Activated CD4-positive, alpha-beta memory T cell treated with anti-CD3 and anti-CD28 coated beads for 36 hours (primary cell): ENCODE measurements at regions of chrX and their contacts with region 1.

Region 1: GRCh38 chrX:72126539-72127140 is 5.1 kb downstream of the RTL5 start:
- DNase-seq: peak; percentile 88
- H3K4me3 Mint-ChIP-seq: no peak overlapping the region
- H3K27ac Mint-ChIP-seq: no peak overlapping the region
- H3K4me1 Mint-ChIP-seq: peaks cover 42% of the 10 kb centered on the region
- H3K27me3 Mint-ChIP-seq: peaks cover 9% of the 10 kb centered on the region

Region 2: DNA sequence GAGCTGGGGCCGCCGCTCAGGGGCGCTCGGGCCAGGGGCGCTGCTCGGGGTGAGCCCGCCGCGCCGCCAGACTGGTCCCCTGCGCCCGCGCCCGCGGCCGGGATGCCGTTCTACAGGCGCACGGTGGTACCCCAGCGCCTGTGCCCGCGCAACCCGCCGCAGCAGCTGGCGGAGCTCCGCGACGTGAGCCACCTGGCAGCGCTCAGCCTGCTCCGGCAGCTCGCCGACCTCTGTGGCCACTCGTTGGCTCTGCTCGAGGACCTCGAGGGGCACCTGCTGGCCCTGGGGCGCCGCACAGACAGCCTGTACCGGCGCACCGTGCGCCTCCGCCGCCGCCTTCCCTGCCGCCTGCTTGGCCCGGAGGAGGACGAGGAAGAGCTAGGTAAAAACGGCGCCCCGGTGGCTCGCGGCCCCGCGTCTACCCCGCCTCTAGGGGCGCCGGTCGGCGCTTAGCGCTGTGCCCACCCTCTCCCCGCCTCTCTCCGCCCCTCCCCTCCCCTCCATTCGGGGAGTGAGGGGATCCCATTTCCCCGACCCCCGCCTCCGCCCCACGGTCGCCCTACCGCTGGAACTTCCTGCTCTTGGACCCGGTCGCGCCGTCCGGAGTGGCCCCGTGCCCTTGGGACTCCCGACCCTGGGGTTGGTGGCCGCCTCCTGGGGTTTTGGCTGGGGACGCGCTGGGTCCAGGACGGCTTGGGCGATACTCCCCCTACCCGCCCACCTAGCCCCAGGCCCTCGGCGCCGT is 215.5 kb before region 1 on chrX:
- CTCF ChIA-PET with region 1: interaction called, 4 read pairs
- POLR2A ChIA-PET with region 1: interaction called, 3 read pairs
- intact Hi-C with region 1: loop called (anchors 2 kb)
- DNase-seq: peak; percentile 38
- H3K4me3 Mint-ChIP-seq: peak overlapping the region; percentile 26
- H3K27ac Mint-ChIP-seq: no peak overlapping the region
- H3K4me1 Mint-ChIP-seq: peaks cover 2% of the 10 kb centered on the region
- H3K27me3 Mint-ChIP-seq: peaks cover 21% of the 10 kb centered on the region

Region 3: DNA sequence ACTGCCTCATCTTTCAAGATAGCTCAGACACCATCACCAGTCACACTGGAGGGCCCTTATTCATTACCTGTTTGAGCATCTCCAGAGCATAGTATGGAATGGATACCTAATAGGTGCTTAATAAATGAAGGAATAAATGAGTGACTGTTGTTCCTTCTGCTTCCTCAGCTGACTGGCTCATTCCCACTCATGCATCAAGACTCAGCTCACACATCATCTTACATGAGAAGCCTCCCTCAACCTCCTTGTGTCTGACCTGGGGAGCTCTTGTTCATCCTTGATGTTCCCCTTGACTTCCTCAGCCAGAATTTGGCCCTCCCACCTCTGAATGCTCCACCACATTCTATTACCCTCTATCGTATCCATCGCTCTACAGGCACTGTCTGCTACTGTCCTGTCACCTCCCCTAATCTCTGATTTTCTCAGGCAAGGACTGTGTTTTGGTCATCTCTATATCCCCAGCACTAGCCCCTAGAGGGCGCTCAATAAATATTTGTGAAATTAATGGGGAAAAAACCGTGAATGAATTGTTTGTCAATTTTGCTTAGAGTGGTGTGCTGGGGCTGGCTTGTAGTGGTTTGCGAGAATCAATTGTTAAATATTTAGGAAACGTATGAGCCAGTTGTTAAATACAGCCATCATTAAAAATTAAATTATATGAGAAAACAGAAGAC is 127.7 kb before region 1 on chrX:
- CTCF ChIA-PET with region 1: interaction called, 60 read pairs
- POLR2A ChIA-PET with region 1: no interaction called
- intact Hi-C with region 1: loop called (anchors 1 kb)
- DNase-seq: peak; percentile 29
- H3K4me3 Mint-ChIP-seq: no peak overlapping the region
- H3K27ac Mint-ChIP-seq: no peak overlapping the region
- H3K4me1 Mint-ChIP-seq: no peaks in the 10 kb centered on the region
- H3K27me3 Mint-ChIP-seq: no peaks in the 10 kb centered on the region

Region 4: DNA sequence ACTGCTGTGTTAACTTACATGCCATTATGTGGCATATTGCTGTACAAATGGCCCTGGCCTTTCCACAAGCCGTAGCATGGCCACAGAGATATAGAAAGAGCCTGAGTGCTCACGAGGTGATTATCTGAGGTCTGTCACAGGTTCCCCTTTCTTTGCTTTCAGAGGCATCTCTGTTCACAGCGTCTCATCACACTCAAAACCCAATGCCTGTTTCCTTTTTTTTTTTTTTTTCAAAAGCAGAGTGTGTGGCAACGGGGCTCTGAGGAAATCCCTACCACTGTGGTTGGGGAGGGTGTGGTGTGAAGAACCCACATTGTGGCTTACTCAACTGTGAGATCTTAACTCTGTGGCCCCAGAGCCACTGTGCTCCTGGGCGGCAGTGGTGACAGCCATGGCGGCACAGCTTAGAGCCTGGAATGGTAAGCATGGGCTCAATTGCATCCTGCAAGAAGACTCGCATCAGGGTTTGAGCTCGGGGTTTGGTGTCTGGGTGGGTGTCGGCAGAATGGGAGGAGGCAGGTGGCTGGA is 25.8 kb before region 1 on chrX:
- CTCF ChIA-PET with region 1: interaction called, 19 read pairs
- POLR2A ChIA-PET with region 1: interaction called, 3 read pairs
- intact Hi-C with region 1: loop called (anchors 1 kb)
- DNase-seq: peak; percentile 87
- H3K4me3 Mint-ChIP-seq: peak overlapping the region; percentile 60
- H3K27ac Mint-ChIP-seq: peak overlapping the region; percentile 74
- H3K4me1 Mint-ChIP-seq: peaks cover 58% of the 10 kb centered on the region
- H3K27me3 Mint-ChIP-seq: no peaks in the 10 kb centered on the region

Region 5: GRCh38 chrX:72181178-72182125 is 54.8 kb after region 1 on chrX and contains the start of gene PIN4:
- CTCF ChIA-PET with region 1: no interaction called
- POLR2A ChIA-PET with region 1: interaction called, 3 read pairs
- intact Hi-C with region 1: loop called (anchors 5 kb)
- DNase-seq: peak; percentile 90
- H3K4me3 Mint-ChIP-seq: no peak within 1 kb of the TSS
- H3K27ac Mint-ChIP-seq: peak within 1 kb of the TSS; percentile 60
- H3K4me1 Mint-ChIP-seq: peaks cover 11% of the 10 kb centered on the region
- H3K27me3 Mint-ChIP-seq: no peaks in the 10 kb centered on the region
- total RNA-seq, gene PIN4: 7.5 to 7.8 TPM

Region 6: GRCh38 chrX:72714476-72714916 is 587.9 kb after region 1 on chrX:
- CTCF ChIA-PET with region 1: no interaction called
- POLR2A ChIA-PET with region 1: no interaction called
- intact Hi-C with region 1: no loop called
- DNase-seq: peak; percentile 10
- H3K4me3 Mint-ChIP-seq: peak overlapping the region; percentile 69
- H3K27ac Mint-ChIP-seq: peak overlapping the region; percentile 38
- H3K4me1 Mint-ChIP-seq: peaks cover 12% of the 10 kb centered on the region
- H3K27me3 Mint-ChIP-seq: peaks cover 6% of the 10 kb centered on the region